ENCODE measurements at regions of chr9 and their contacts with region 1.

Region 1: DNA sequence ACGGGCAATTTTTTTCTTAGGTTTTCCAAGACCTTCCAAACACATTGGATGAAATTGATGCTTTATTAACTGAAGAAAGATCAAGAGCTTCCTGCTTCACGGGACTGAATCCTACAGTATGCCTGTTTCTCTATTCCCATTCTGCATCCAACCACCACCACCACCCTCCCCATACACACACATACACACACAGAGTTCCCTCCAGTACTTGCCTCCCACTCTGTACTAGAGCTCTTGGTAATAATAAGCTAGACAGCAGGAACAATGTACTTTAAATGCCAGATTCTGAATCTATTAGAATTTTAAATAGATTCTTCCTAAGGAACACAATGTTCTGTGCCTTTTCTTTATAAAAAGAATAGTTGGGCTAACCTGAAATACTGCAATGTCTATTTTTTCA is 67.4 kb downstream of the KLF9 start:
- DNase-seq: no peak
- ATAC-seq: no peak
- H3K4me3 ChIP-seq: no peak overlapping the region
- H3K27ac ChIP-seq: no peak overlapping the region
- H3K4me1 ChIP-seq: no peaks in the 10 kb centered on the region
- H3K27me3 ChIP-seq: no peaks in the 10 kb centered on the region
- CTCF ChIP-seq: no peak

Region 2: GRCh38 chr9:70413798-70414775 is 67.0 kb after region 1 on chr9 and contains the start of gene KLF9:
- CTCF ChIA-PET with region 1: no interaction called
- POLR2A ChIA-PET with region 1: no interaction called
- in situ Hi-C with region 1: no loop called
- intact Hi-C with region 1: loop called (anchors 5 kb)
- DNase-seq: peak; percentile 71
- ATAC-seq: peak; percentile 84
- H3K4me3 ChIP-seq: peak within 1 kb of the TSS; percentile 54 to 58
- H3K27ac ChIP-seq: peak within 1 kb of the TSS; percentile 41
- H3K4me1 ChIP-seq: 0 out of 2 replicates have a peak, but pooled peaks cover 3% of the 10 kb centered on the region
- H3K27me3 ChIP-seq: no peaks in the 10 kb centered on the region
- CTCF ChIP-seq: no peak
- total RNA-seq, gene KLF9: 0.95 TPM

Region 3: GRCh38 chr9:70602321-70603019 is 255.4 kb after region 1 on chr9:
- CTCF ChIA-PET with region 1: no interaction called
- POLR2A ChIA-PET with region 1: no interaction called
- in situ Hi-C with region 1: no loop called
- intact Hi-C with region 1: loop called (anchors 5 kb)
- DNase-seq: peak; percentile 39
- ATAC-seq: peak; percentile 77
- H3K4me3 ChIP-seq: no peak overlapping the region
- H3K27ac ChIP-seq: no peak overlapping the region
- H3K4me1 ChIP-seq: no peaks in the 10 kb centered on the region
- H3K27me3 ChIP-seq: no peaks in the 10 kb centered on the region
- CTCF ChIP-seq: peak; percentile 79

Measured in Panc1 (cell line).